AG04450 (cell line): ENCODE measurements at regions of chr4 and their contacts with region 1.

Region 1: GRCh38 chr4:109218288-109218687 is 84.2 kb downstream of the COL25A1 start:
- DNase-seq: no peak
- H3K4me3 ChIP-seq: no peak overlapping the region
- H3K27ac ChIP-seq: no peak overlapping the region
- H3K27me3 ChIP-seq: peaks cover 2% of the 10 kb centered on the region
- CTCF ChIP-seq: no peak

Region 2: DNA sequence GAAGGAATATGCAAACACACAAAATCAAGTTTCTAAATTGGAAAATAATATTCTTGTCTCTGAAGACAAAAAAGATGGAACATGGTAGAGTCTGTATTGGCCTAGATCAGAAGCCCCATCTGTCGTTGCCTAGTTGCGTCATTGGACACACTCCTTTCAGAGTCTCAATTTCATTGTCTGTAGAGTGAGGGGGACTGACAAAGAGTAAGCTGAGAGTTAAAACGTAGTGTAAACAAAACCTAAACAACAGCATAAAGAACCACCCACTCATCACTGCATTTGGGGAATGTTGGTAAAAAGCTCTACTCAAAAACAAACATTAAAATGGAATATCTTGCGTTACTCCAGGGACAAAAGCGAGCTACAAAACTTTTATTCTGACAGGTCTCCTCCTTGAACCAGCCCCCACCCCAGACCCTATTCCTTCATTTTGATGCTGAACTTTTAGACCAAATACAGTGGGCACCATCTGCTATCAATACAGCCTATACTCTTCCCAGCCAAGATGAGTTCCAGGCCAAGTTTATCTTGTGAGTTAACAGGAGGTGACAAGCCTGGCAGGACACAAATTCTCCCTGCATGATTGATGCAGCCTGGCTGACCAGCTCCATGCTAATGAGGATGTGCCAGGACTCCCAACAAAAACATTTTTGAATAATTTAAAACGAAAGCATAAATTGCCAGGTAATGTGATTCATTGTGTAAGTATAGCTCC is 41.0 kb before region 1 on chr4:
- CTCF ChIA-PET with region 1: interaction called, 14 read pairs
- POLR2A ChIA-PET with region 1: no interaction called
- DNase-seq: no peak
- H3K4me3 ChIP-seq: no peak overlapping the region
- H3K27ac ChIP-seq: no peak overlapping the region
- H3K27me3 ChIP-seq: no peaks in the 10 kb centered on the region
- CTCF ChIP-seq: no peak

Region 3: GRCh38 chr4:109499513-109499912 is 281.2 kb after region 1 on chr4:
- CTCF ChIA-PET with region 1: no interaction called
- POLR2A ChIA-PET with region 1: no interaction called
- DNase-seq: no peak
- H3K4me3 ChIP-seq: no peak overlapping the region
- H3K27ac ChIP-seq: no peak overlapping the region
- H3K27me3 ChIP-seq: no peaks in the 10 kb centered on the region
- CTCF ChIP-seq: no peak